Activated naive CD4-positive, alpha-beta T cell treated with anti-CD3 and anti-CD28 coated beads for 36 hours (primary cell): ENCODE measurements at regions of chr6 and their contacts with region 1.

Region 1: DNA sequence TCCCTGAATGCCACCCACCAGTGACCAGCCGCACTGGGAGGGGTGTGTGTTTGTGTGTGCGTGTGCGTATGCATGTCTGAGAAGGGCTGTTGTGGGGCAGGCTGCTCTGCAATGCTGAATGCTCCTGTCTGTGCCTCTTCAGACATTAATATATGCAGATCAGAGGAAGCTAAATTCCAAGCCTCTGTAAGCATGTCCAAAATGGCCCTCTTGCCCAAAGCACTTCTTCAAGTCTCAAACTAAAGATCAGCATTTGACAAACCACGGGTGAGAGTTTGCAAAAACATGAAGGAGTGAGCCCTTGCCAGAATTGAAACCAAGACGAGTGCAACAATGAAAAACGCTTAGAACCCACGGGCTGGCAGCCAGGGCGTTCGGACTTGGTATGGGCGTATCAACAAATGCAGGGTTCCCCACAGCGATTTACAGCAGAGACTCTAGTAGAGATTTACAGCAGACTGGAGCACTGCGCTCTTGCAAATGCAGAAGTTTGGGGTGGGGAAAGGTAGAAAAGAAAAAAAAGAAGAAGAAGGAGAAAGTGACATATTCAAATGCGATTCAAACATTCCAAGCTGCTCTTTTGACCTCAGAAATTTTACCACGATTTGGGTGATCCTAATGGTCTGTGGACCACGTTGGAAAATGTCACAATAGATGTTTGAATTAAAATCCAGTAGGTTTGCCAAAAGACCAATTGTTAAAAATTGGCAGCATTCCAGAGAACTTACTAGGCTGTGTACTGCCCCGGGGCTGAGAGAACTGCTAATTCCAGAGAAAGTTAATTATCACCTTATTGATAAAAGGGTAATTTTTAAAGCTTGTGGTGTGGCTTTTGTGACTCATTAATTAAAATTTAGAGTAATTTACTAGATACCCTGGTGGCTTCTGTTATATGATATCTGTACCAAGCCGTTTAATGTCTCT is 3.5 kb downstream of the SCML4 start:
- DNase-seq: peak; percentile 55
- H3K4me3 Mint-ChIP-seq: peak overlapping the region; percentile 88
- H3K27ac Mint-ChIP-seq: peak overlapping the region; percentile 98
- H3K4me1 Mint-ChIP-seq: peaks cover 83% of the 10 kb centered on the region
- H3K27me3 Mint-ChIP-seq: no peaks in the 10 kb centered on the region

Region 2: DNA sequence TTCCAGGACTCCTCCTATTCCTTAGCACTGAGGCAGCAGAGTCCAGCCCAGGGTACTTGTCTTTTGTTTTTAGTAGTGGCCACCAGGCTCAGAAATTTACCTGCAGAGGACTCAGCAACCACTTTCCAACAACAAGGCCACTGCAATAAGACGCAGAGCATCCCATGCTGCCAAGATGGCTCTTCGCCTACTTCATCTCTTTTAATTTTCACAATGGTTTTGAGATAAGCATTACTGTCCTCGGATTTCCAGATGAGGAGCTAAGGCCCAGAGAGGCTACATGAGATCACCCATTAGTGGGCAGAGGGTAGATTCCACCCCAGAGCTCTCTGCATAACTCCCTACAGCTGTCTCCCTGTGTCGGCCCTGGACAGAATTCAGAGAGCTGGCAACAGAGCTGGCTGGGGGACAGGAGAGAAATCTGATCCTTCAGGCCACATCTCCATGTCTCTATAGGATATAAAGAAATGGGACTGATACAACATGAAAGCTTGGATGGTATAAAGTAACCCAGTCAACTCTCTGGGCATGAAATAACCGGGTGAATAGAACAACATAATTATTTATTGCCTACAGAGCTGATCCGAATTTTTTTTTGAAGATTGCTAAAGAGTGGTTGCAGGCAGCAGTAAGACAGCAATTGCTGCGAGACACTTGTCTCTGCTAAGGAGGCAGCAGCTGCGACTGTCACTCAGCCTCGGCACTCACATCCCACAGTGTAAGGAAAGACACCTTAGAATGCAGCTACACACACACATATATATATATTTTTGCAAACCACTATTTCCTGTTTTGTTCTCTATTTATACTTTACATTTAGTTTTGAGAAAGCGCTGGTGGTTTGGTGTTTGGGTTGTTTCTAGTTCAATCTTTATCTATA is 33.7 kb before region 1 on chr6:
- CTCF ChIA-PET with region 1: interaction called, 6 read pairs
- intact Hi-C with region 1: loop called (anchors 1 kb)
- DNase-seq: peak; percentile 56
- H3K4me3 Mint-ChIP-seq: peak overlapping the region; percentile 57
- H3K27ac Mint-ChIP-seq: peak overlapping the region; percentile 8
- H3K4me1 Mint-ChIP-seq: peaks cover 79% of the 10 kb centered on the region
- H3K27me3 Mint-ChIP-seq: no peaks in the 10 kb centered on the region

Region 3: GRCh38 chr6:107806691-107807090 is 13.9 kb before region 1 on chr6:
- CTCF ChIA-PET with region 1: interaction called, 11 read pairs
- intact Hi-C with region 1: loop called (anchors 1 kb)
- DNase-seq: no peak
- H3K4me3 Mint-ChIP-seq: no peak overlapping the region
- H3K27ac Mint-ChIP-seq: no peak overlapping the region
- H3K4me1 Mint-ChIP-seq: peaks cover 76% of the 10 kb centered on the region
- H3K27me3 Mint-ChIP-seq: no peaks in the 10 kb centered on the region